Activated CD4-positive, alpha-beta T cell treated with anti-CD3 and anti-CD28 coated beads, Interleukin-2, amount 10 ng/mL, durations not matched to agents 7 days and 5 days (primary cell): ENCODE measurements at regions of chr22 and their contacts with region 1.

Region 1: DNA sequence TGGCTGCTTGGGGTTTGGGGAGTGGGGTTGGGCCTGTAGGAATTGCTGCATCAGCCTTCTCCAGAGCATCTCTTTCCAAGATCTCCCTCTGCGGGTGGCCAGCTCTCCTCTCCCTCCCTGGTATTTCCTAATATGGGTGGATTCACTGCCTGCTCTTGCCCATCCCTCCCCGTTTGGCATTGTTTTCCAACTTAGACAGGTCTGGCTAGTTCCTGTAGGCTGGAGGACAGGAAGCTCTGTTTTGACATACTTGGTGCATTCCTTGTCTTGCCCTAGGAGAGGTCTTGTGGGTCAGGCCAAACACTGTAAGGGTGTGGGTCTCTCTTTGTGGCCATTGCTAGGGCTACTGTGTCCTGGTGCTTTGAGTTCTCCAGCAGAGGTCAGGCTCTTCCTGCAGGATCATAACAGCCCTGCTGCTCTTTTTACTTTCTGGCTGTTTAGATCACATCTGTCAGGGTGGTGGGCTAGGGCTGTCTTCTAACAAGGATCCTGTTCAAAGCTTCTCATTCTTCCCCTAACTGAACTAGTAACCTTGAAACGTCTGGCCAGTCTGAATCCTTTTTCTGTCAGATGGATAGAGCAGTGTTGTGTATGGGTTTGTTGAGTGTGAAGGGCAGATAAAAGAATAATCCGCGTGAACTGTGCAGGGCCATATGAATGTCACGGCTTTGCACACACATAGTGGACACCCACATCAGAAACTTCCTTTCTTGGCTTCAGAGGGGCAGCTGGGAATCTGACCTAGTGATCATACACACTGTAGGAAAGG is 18.3 kb upstream of the MICALL1 start:
- DNase-seq: no peak
- H3K4me3 Mint-ChIP-seq: no peak overlapping the region
- H3K27ac Mint-ChIP-seq: peak overlapping the region; percentile 50
- H3K4me1 Mint-ChIP-seq: peaks cover 9% of the 10 kb centered on the region
- H3K27me3 Mint-ChIP-seq: no peaks in the 10 kb centered on the region

Region 2: GRCh38 chr22:37757663-37758062 is 130.1 kb before region 1 on chr22:
- CTCF ChIA-PET with region 1: no interaction called
- POLR2A ChIA-PET with region 1: no interaction called
- DNase-seq: no peak
- H3K4me3 Mint-ChIP-seq: no peak overlapping the region
- H3K27ac Mint-ChIP-seq: no peak overlapping the region
- H3K4me1 Mint-ChIP-seq: peaks cover 2% of the 10 kb centered on the region
- H3K27me3 Mint-ChIP-seq: no peaks in the 10 kb centered on the region

Region 3: GRCh38 chr22:37768273-37768672 is 119.5 kb before region 1 on chr22:
- CTCF ChIA-PET with region 1: no interaction called
- POLR2A ChIA-PET with region 1: no interaction called
- DNase-seq: no peak
- H3K4me3 Mint-ChIP-seq: no peak overlapping the region
- H3K27ac Mint-ChIP-seq: no peak overlapping the region
- H3K4me1 Mint-ChIP-seq: no peaks in the 10 kb centered on the region
- H3K27me3 Mint-ChIP-seq: no peaks in the 10 kb centered on the region

Region 4: GRCh38 chr22:37905534-37906363 is 18.0 kb after region 1 on chr22 and contains the start of gene MICALL1:
- CTCF ChIA-PET with region 1: interaction called, 10 read pairs
- POLR2A ChIA-PET with region 1: interaction called, 3 read pairs
- DNase-seq: peak; percentile 59
- H3K4me3 Mint-ChIP-seq: peak within 1 kb of the TSS; percentile 72
- H3K27ac Mint-ChIP-seq: peak within 1 kb of the TSS; percentile 87
- H3K4me1 Mint-ChIP-seq: peaks cover 33% of the 10 kb centered on the region
- H3K27me3 Mint-ChIP-seq: no peaks in the 10 kb centered on the region
- total RNA-seq, gene MICALL1: 27.6 to 30.7 TPM

Region 5: GRCh38 chr22:37916311-37916710 is 28.5 kb after region 1 on chr22:
- CTCF ChIA-PET with region 1: no interaction called
- POLR2A ChIA-PET with region 1: no interaction called
- DNase-seq: no peak
- H3K4me3 Mint-ChIP-seq: no peak overlapping the region
- H3K27ac Mint-ChIP-seq: no peak overlapping the region
- H3K4me1 Mint-ChIP-seq: peaks cover 26% of the 10 kb centered on the region
- H3K27me3 Mint-ChIP-seq: no peaks in the 10 kb centered on the region

Region 6: GRCh38 chr22:38051900-38052862 is 164.4 kb after region 1 on chr22:
- CTCF ChIA-PET with region 1: no interaction called
- POLR2A ChIA-PET with region 1: no interaction called
- DNase-seq: peak; percentile 78
- H3K4me3 Mint-ChIP-seq: no peak overlapping the region
- H3K27ac Mint-ChIP-seq: no peak overlapping the region
- H3K4me1 Mint-ChIP-seq: peaks cover 12% of the 10 kb centered on the region
- H3K27me3 Mint-ChIP-seq: peaks cover 3% of the 10 kb centered on the region